ENCODE measurements at regions of chr17 and their contacts with region 1.

Region 1: GRCh38 chr17:42609182-42609813 is at the starts of genes RETREG3 and TUBG1:
- DNase-seq: peak; percentile 98 to 100 (median 99)
- ATAC-seq: peak; percentile 92
- H3K4me3 ChIP-seq: peak within 1 kb of the TSS; percentile 90 to 94
- H3K4me3 Mint-ChIP-seq: peak within 1 kb of the TSS; percentile 100
- H3K27ac ChIP-seq: peak within 1 kb of the TSS; percentile 90 to 91
- H3K27ac Mint-ChIP-seq: peak within 1 kb of the TSS; percentile 99
- H3K4me1 ChIP-seq: peaks cover 39% of the 10 kb centered on the region
- H3K4me1 Mint-ChIP-seq: peaks cover 48% of the 10 kb centered on the region
- H3K27me3 ChIP-seq: no peaks in the 10 kb centered on the region
- H3K27me3 Mint-ChIP-seq: no peaks in the 10 kb centered on the region
- CTCF ChIP-seq: no peak
- total RNA-seq, gene RETREG3: 59.0 to 59.3 TPM
- total RNA-seq, gene TUBG1: 4.9 to 8.4 TPM

Region 2: GRCh38 chr17:42312285-42313130 is 296.8 kb before region 1 on chr17:
- CTCF ChIA-PET with region 1: no interaction called
- POLR2A ChIA-PET with region 1: no interaction called
- intact Hi-C with region 1: no loop called
- DNase-seq: peak; percentile 45 to 89 (median 79)
- ATAC-seq: peak; percentile 61
- H3K4me3 ChIP-seq: peak overlapping the region; percentile 20 to 38
- H3K4me3 Mint-ChIP-seq: peak overlapping the region; percentile 74
- H3K27ac ChIP-seq: peak overlapping the region; percentile 31 to 66
- H3K27ac Mint-ChIP-seq: peak overlapping the region; percentile 86
- H3K4me1 ChIP-seq: peaks cover 69% of the 10 kb centered on the region
- H3K4me1 Mint-ChIP-seq: peaks cover 72% of the 10 kb centered on the region
- H3K27me3 ChIP-seq: no peaks in the 10 kb centered on the region
- H3K27me3 Mint-ChIP-seq: no peaks in the 10 kb centered on the region
- CTCF ChIP-seq: peak; percentile 62

Region 3: GRCh38 chr17:42536048-42536371 is 73.3 kb before region 1 on chr17 and contains the start of gene NAGLU:
- CTCF ChIA-PET with region 1: no interaction called
- POLR2A ChIA-PET with region 1: interaction called, 5 read pairs
- intact Hi-C with region 1: loop called in 1 of 2 experiments (anchors 1 kb)
- DNase-seq: peak; percentile 47 to 89 (median 76)
- ATAC-seq: peak; percentile 69
- H3K4me3 ChIP-seq: peak within 1 kb of the TSS; percentile 56 to 82
- H3K4me3 Mint-ChIP-seq: peak within 1 kb of the TSS; percentile 87
- H3K27ac ChIP-seq: peak within 1 kb of the TSS; percentile 33 to 71
- H3K27ac Mint-ChIP-seq: peak within 1 kb of the TSS; percentile 87
- H3K4me1 ChIP-seq: peaks cover 38% of the 10 kb centered on the region
- H3K4me1 Mint-ChIP-seq: peaks cover 42% of the 10 kb centered on the region
- H3K27me3 ChIP-seq: no peaks in the 10 kb centered on the region
- H3K27me3 Mint-ChIP-seq: no peaks in the 10 kb centered on the region
- CTCF ChIP-seq: no peak
- total RNA-seq, gene NAGLU: 7.4 TPM

Region 4: DNA sequence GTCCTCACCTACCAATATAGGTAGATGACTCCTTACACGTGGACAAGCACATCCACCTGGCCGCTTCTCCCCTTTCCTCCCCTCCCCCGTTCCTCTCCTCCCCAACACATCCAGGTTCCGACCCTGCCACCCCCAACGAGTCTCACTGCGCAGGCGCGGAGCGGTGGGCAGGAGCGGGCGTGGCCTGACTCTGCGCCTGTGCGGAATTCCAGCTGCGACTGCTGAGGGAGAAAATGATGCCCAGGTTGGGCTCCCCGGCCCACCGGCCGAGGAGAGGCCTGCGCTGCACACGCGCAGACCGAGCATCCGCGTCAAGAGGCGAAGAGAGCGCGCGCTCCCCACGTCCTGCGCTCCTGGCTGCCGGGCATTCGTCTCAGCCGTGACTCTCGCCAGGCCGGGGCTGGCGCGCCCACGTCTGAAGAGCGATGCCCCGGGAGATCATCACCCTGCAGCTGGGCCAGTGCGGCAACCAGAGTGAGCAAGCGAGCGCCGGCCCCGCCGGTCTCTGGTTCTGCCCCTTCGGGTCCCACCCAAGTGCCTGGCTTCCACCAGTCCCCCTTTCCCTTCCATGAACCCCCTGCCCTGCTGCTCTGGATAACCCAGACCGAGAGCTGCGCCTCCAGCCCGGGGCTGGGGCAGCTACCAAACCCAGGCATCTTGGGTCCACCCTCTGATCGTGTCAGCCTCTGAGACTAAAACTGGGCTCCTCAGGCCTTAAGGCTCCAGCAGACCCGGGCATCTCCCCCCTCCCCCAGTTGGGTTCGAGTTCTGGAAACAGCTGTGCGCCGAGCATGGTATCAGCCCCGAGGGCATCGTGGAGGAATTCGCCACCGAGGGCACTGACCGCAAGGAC is 50.0 kb after region 1 on chr17 and contains the start of gene TUBG2:
- CTCF ChIA-PET with region 1: no interaction called
- POLR2A ChIA-PET with region 1: interaction called, 3 read pairs
- intact Hi-C with region 1: loop called in 1 of 2 experiments (anchors 5 kb)
- DNase-seq: peak; percentile 43 to 84 (median 73)
- ATAC-seq: peak; percentile 80
- H3K4me3 ChIP-seq: peak within 1 kb of the TSS; percentile 72 to 92
- H3K4me3 Mint-ChIP-seq: peak within 1 kb of the TSS; percentile 91
- H3K27ac ChIP-seq: peak within 1 kb of the TSS; percentile 5 to 45
- H3K27ac Mint-ChIP-seq: peak within 1 kb of the TSS; percentile 84
- H3K4me1 ChIP-seq: peaks cover 5% of the 10 kb centered on the region
- H3K4me1 Mint-ChIP-seq: peaks cover 14% of the 10 kb centered on the region
- H3K27me3 ChIP-seq: no peaks in the 10 kb centered on the region
- H3K27me3 Mint-ChIP-seq: peaks cover 8% of the 10 kb centered on the region
- CTCF ChIP-seq: no peak
- total RNA-seq, gene TUBG2: 7.4 to 10.6 TPM

Region 5: DNA sequence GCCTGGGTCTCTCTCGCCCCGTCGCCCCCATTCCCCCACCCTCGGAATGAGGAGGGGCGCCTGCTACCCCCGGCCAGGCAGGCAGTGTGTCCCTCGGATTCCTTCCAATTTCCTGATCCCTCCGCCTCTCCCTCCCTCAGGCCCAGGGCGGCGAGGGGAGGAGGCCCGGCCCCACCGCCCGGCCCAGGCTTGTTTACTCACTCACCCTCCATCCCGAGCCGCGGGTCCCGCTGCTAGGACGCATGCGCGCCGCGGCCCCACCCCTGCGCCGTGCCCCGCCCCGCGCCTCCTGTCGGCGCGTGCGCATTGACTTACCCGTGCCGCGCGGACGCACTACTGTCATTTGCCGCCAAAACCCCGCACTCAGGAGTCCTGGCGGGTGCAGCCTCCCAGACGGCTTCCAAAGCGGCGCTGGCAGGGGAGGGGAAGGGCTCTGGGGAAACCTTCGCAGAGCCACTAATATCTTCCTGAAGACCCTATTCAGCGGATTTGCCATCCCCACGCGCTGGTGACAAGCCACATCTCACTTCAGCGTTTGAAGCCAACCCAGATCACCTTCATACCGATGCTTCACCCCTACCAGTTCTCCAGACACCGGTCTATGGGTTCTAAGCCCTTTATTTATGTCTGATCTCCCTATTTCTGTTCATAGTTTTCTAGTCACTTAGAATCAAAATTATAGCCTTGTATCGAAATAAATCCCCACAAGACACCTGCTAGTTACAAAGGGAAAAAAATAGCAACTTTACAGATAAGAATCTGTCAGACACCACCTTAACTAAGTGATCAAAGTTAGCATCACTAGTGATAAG is 135.7 kb after region 1 on chr17 and contains the start of gene EZH1:
- CTCF ChIA-PET with region 1: no interaction called
- POLR2A ChIA-PET with region 1: no interaction called
- intact Hi-C with region 1: loop called (anchors 1 to 2 kb)
- DNase-seq: peak; percentile 82 to 96 (median 90)
- ATAC-seq: peak; percentile 92
- H3K4me3 ChIP-seq: peak within 1 kb of the TSS; percentile 72 to 73
- H3K4me3 Mint-ChIP-seq: peak within 1 kb of the TSS; percentile 98
- H3K27ac ChIP-seq: peak within 1 kb of the TSS; percentile 62 to 79
- H3K27ac Mint-ChIP-seq: peak within 1 kb of the TSS; percentile 96
- H3K4me1 ChIP-seq: peaks cover 17% of the 10 kb centered on the region
- H3K4me1 Mint-ChIP-seq: peaks cover 31% of the 10 kb centered on the region
- H3K27me3 ChIP-seq: peaks cover 0 to 4% of the 10 kb centered on the region in 2 experiments
- H3K27me3 Mint-ChIP-seq: peaks cover 13% of the 10 kb centered on the region
- CTCF ChIP-seq: no peak
- total RNA-seq, gene EZH1: 59.2 to 63.4 TPM

Region 6: DNA sequence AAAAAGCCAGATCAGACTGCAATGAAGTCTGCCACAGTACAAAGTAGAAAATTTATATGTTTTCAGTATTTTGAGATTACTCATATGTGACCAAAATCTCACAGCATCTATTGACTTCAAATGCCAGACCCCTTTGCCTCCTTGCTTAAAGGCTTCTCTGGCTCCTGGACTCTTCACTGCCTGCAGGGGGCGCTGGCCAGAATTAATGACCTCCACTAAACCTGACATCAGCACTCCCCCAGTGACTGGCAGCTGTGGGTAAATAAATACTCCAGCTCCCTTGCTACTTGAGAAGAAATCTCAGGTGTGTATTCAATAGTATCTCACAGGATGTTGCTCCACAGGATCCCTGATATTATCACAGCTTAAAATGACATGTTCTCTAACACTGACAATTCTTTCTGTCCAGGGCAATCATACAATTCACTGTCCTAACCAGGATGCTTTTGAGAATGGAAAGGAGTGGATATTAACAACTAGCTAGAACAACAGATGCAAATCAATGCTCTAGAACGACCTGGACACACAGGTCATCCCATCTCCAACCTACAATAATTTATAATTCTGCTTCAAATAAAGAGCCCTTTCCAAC is 210.7 kb after region 1 on chr17:
- CTCF ChIA-PET with region 1: no interaction called
- POLR2A ChIA-PET with region 1: no interaction called
- intact Hi-C with region 1: loop called in 1 of 2 experiments (anchors 5 kb)
- DNase-seq: peak; percentile 26 to 74 (median 63)
- ATAC-seq: peak; percentile 24
- H3K4me3 ChIP-seq: no peak overlapping the region
- H3K4me3 Mint-ChIP-seq: no peak overlapping the region
- H3K27ac ChIP-seq: no peak overlapping the region
- H3K27ac Mint-ChIP-seq: no peak overlapping the region
- H3K4me1 ChIP-seq: peaks cover 13% of the 10 kb centered on the region
- H3K4me1 Mint-ChIP-seq: peaks cover 34% of the 10 kb centered on the region
- H3K27me3 ChIP-seq: no peaks in the 10 kb centered on the region
- H3K27me3 Mint-ChIP-seq: no peaks in the 10 kb centered on the region
- CTCF ChIP-seq: peak; percentile 73